ENCODE measurements at regions of chr11 and their contacts with region 1.

Region 1: DNA sequence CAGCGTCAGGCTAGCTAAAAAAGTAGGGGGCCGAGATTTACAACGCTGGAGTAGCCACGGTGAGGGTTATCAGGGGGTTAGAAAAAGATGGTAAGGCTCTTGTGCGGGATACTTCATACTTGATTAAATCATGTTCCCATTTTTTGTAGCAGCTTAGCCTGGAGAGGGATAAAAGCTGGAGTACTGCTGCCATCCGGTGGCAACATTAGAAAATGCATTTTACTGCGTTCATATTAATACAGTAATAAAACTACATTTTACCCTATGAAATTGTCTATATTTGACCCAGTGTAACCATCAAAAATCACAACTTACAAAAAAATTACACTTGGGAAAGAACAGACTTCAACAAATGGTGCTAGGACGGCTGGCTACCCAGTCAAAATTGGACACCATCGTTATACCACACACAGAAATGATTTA is 17.3 kb downstream of the RPUSD4 start:
- DNase-seq: peak; percentile 37 to 68 (median 55)
- H3K4me3 ChIP-seq: no peak overlapping the region
- H3K27ac ChIP-seq: no peak overlapping the region
- H3K4me1 ChIP-seq: no peaks in the 10 kb centered on the region
- H3K27me3 ChIP-seq: no peaks in the 10 kb centered on the region

Region 2: DNA sequence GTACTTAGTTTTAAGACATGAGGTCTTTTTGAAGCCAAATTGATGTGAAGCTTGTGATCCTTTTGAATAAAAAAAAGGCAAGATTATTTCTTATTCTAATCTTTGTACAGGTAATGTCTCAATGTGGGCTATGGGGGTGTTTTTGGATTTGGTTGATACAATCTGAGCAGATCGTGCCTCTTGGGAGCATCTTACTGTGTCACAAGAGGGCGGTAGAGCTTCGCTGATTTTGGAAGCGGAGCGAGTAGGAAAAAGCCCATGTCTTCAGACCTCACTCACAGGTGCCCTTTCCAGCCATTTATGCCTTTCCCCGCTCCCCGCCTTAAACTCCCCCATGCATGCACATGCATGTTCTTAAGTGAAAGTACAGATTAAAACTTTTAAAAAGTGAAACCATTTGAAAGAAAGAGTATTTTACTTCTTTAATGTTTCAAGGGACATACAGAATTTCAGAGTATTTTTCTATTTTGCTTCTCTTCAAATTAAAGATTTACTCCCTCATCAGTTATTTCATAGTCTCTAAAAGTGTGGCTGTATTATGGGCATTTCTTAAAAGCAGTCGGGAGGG is 271.0 kb before region 1 on chr11:
- CTCF ChIA-PET with region 1: interaction called, 84 read pairs
- POLR2A ChIA-PET with region 1: no interaction called
- DNase-seq: peak; percentile 63 to 80 (median 72)
- H3K4me3 ChIP-seq: no peak overlapping the region
- H3K27ac ChIP-seq: no peak overlapping the region
- H3K4me1 ChIP-seq: no peaks in the 10 kb centered on the region
- H3K27me3 ChIP-seq: peaks cover 0 to 10% (median 3%) of the 10 kb centered on the region in 5 experiments

Region 3: GRCh38 chr11:125941619-125942611 is 252.2 kb before region 1 on chr11:
- CTCF ChIA-PET with region 1: interaction called, 28 read pairs
- POLR2A ChIA-PET with region 1: no interaction called
- DNase-seq: peak; percentile 14 to 46 (median 27)
- H3K4me3 ChIP-seq: no peak overlapping the region
- H3K27ac ChIP-seq: no peak overlapping the region
- H3K4me1 ChIP-seq: peaks cover 0 to 2% (median 0%) of the 10 kb centered on the region in 4 experiments
- H3K27me3 ChIP-seq: peaks cover 0 to 12% (median 3%) of the 10 kb centered on the region in 5 experiments

Measured in common myeloid progenitor, CD34-positive (primary cell).